Ovary (tissue), 10 donors: ENCODE measurements at regions of chr1 and their contacts with region 1.

Region 1: DNA sequence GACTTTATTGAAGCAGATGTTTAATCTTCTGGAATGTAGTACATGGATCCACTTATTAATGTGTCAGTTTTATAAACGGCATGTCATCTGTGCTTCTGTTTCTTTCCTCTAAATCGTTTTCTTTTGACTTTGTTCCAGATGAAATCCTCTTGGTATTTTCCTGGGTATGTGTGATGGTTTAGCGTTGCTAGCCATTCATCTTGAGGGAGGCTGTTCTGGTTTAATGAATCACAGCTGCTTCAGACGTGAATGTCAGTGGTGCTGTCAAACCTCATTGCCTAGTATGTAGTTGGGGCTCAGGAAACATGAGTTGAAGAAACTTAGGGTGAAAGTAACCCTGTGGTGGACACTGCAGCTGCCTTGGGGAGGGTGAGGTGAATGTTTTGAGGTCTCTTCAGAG is 33.2 kb downstream of the KCNK1 start:
- DNase-seq: no peak
- H3K4me3 ChIP-seq: no peak overlapping the region
- H3K27ac ChIP-seq: no peak overlapping the region
- H3K4me1 ChIP-seq: no peaks in the 10 kb centered on the region
- H3K27me3 ChIP-seq: no peaks in the 10 kb centered on the region
- CTCF ChIP-seq: no peak
- EP300 ChIP-seq: no peak
- POLR2A ChIP-seq: no peak

Region 2: DNA sequence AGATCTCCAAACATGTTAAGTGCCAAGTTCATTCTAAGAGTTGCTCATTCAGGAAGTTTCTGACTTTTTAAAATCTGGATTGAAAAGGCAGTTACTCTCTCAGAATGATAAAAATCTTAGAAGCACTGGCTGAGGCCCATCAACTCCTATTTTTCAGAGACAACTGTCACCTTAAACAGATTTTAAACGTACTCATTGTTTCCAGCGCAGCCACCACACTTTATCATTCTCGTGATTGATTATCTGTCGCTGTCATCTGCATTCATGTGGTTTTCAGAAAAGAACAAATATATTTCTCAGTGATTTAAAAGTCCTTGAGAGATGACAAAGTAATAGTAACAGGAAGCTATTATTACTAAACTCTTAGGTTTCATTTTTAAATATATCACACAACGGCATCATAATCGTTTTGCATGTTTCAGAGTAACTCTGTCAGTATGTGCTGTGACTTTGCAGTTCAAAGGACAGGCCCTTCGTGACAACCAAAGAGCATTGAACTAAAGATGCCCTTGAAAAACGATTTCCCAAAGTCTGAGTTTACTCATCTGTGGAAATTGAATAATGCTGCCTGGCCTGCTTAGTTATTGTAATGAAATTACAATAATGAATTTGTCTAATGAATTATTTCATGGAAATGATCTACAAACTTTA is 48.1 kb before region 1 on chr1:
- intact Hi-C with region 1: no loop called
- DNase-seq: no peak
- H3K4me3 ChIP-seq: no peak overlapping the region
- H3K27ac ChIP-seq: no peak overlapping the region
- H3K4me1 ChIP-seq: no peaks in the 10 kb centered on the region
- H3K27me3 ChIP-seq: no peaks in the 10 kb centered on the region
- CTCF ChIP-seq: no peak
- EP300 ChIP-seq: no peak
- POLR2A ChIP-seq: no peak

Region 3: GRCh38 chr1:233679591-233680373 is 32.7 kb after region 1 on chr1:
- intact Hi-C with region 1: loop called in 1 of 4 experiments (anchors 1 kb)
- DNase-seq: no peak
- H3K4me3 ChIP-seq: no peak overlapping the region
- H3K27ac ChIP-seq: no peak overlapping the region
- H3K4me1 ChIP-seq: peaks cover 2% of the 10 kb centered on the region
- H3K27me3 ChIP-seq: no peaks in the 10 kb centered on the region
- CTCF ChIP-seq: no peak
- EP300 ChIP-seq: no peak
- POLR2A ChIP-seq: no peak